ENCODE measurements at regions of chr3 and their contacts with region 1.

Region 1: DNA sequence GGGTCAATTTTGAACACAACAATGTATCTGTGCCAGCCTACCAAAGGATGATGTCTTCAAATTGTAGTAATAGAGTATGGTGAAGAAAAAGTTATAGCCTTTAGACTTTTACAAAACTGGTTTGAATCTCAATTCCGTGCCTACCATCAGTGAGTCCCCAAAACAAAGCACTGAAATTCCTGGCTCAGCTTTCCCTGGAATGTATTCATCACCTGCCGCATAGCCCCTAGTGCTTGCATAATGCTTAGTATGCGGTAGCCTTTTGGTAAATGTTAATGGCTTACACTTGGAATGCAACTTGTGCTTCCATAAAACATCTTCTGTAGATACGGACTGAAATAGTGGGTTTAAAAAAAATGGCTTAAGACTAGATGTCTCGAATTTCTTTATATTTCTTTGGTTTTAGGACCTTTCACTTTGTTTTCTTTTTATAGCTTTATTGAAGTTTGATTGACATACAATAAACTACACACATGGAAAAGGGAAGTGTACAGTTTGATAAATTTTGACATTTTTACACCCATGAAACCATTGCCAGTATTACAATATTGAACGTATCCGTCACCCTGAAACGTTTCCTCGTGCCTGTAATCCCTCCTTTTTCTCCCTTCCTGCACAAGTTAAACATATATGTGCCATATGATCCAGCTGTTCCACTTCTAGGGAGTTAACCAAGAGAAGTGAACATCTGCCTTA is 12.1 kb downstream of the SACM1L start:
- DNase-seq: no peak
- H3K4me3 ChIP-seq: no peak overlapping the region
- CTCF ChIP-seq: no peak

Region 2: DNA sequence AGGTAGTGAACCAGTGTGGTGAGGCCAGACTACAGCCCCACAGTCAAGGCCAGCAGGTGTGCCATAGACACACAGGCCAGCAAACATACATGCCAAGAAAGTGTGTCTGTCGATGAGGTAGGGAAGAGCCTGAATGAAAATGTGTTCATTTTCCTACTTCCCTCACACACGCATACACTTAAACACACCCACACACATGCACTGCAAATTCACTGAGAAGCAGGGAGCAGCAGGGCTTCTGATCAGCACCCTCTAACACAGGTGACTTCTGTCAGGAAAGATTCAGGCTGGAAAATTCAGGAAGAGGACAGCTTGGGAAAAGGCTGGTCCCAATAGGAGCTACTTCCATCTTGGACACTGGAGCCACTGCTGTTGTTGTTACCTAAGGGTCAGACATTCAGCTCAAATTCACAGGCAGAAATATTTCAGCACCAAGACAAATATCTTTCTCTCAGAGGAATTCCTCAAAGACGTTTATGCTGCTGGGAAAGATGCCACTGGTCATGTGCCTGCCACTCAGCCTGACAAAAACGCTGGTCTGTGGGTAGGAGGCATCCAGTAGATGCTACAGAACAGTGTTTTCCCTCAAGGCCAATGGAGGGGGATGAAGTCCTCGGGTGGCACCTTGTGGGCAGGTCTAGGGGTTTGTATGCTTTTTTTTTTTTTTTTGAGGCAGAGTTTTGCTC is 353.9 kb before region 1 on chr3:
- CTCF ChIA-PET with region 1: no interaction called
- POLR2A ChIA-PET with region 1: no interaction called
- DNase-seq: no peak
- H3K4me3 ChIP-seq: no peak overlapping the region
- CTCF ChIP-seq: no peak

Region 3: GRCh38 chr3:45688882-45689756 is 12.2 kb before region 1 on chr3 and contains the start of gene SACM1L:
- CTCF ChIA-PET with region 1: interaction called, 15 read pairs
- POLR2A ChIA-PET with region 1: no interaction called
- DNase-seq: peak; percentile 91
- H3K4me3 ChIP-seq: peak within 1 kb of the TSS; percentile 71
- CTCF ChIP-seq: no peak

Region 4: DNA sequence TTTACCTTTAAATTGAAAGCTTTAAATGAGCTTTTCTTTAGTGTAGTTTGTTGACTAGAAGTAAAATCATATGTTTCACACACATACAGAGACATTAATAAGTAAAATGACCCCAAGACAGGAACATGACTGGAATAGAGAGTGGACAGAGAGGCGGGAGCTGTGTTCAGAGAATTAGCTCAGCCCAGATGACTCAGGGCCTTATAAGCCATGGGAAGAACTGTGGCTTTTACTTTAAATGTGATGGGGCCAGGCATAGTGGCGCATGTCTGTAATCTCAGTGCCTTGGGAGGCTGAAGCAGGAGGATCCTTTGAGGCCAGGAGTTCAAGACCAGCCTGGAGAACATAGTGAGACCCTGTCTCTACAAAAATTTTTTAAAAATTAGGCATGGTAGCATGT is 14.6 kb after region 1 on chr3:
- CTCF ChIA-PET with region 1: interaction called, 10 read pairs
- POLR2A ChIA-PET with region 1: no interaction called
- DNase-seq: no peak
- H3K4me3 ChIP-seq: no peak overlapping the region
- CTCF ChIP-seq: no peak